IMR-90 (cell line): ENCODE measurements at regions of chr15 and their contacts with region 1.

Region 1: DNA sequence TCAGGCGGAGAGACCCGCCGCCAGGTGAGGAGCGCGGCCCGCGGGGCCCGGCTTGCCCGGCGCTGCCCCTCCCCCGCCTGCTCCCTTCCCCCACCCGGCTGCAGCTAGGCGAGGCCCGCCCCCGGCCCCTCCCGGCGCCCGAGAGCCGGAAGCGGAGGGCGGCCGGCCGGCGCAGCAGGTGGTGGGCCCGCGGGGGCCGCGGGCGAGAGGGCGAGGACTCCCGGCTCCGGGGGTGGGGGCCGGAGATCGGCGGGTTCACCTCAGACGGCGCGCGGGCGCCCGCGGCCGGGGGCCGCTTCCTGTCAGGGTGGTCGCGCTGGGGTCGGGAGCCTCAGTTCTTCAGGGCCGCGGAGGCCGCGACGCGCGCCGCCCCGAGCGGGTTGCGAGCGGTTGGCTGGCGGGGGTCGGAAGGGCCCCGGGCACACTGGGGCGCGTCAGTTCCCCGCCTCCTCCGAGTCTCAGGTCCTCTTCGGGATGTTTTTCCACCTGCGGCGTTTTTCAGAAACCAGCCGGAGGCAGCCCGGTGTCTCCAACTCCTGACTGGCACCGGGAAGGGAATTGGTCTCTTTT is 395 bp downstream of the ZFAND6 start:
- DNase-seq: peak; percentile 16
- ATAC-seq: peak; percentile 82
- H3K4me3 ChIP-seq: peak overlapping the region; percentile 77
- H3K27ac ChIP-seq: peak overlapping the region; percentile 61
- H3K4me1 ChIP-seq: peaks cover 3% of the 10 kb centered on the region; the same call in 1 of the 2 replicates
- H3K27me3 ChIP-seq: no peaks in the 10 kb centered on the region; the same call in 1 of the 2 replicates
- CTCF ChIP-seq: no peak
- POLR2A ChIP-seq: peak; percentile 18; the same call in 1 of the 2 replicates
- RAD21 ChIP-seq: no peak

Region 2: GRCh38 chr15:80234883-80235282 is 175.0 kb after region 1 on chr15:
- CTCF ChIA-PET with region 1: no interaction called
- POLR2A ChIA-PET with region 1: no interaction called
- dilution Hi-C with region 1: no loop called
- in situ Hi-C with region 1: no loop called
- intact Hi-C with region 1: loop called (anchors 10 kb)
- DNase-seq: peak; percentile 14
- ATAC-seq: peak; percentile 21; the same call in 1 of the 2 replicates
- H3K4me3 ChIP-seq: no peak overlapping the region
- H3K27ac ChIP-seq: no peak overlapping the region
- H3K4me1 ChIP-seq: no peaks in the 10 kb centered on the region
- H3K27me3 ChIP-seq: peaks cover 28% of the 10 kb centered on the region
- CTCF ChIP-seq: peak; percentile 36
- POLR2A ChIP-seq: no peak
- RAD21 ChIP-seq: peak; percentile 42